ENCODE measurements at regions of chr15 and their contacts with region 1.

Region 1: GRCh38 chr15:40941528-40942336 is 11.5 kb upstream of the CHAC1 start:
- DNase-seq: no peak
- H3K4me3 ChIP-seq: peak overlapping the region; percentile 40 to 74 (median 56)
- H3K27ac ChIP-seq: peak overlapping the region; percentile 57 to 93 (median 85)
- H3K4me1 ChIP-seq: peaks cover 22 to 52% (median 28%) of the 10 kb centered on the region in 3 donors
- H3K27me3 ChIP-seq: no peaks in the 10 kb centered on the region
- CTCF ChIP-seq: peak in 5 of 6 experiments; percentile 11 to 92 (median 79)
- POLR2A ChIP-seq: peak in 2 of 4 donors; percentile 25 to 42

Region 2: DNA sequence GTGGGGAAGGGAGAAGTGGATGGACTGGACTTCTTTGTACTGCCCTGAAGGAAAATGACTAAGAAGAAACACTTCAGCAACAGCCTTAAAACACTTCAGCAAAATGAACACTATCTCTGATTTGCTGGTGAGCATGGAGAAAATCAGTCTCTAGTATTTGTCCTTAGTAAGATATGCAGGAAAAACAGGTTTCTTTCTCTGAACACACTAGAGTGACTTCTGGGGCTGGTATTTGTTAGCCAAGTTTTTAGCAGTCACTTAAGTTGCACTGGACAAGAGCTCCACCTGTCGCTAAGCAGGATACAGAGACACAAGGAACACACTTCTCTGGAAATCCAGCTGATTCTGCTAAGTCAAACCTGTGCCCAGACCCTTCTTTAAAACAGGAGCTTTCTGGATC is 76.8 kb after region 1 on chr15:
- intact Hi-C with region 1: loop called (anchors 5 kb)
- DNase-seq: no peak
- H3K4me3 ChIP-seq: no peak overlapping the region
- H3K27ac ChIP-seq: peak overlapping the region in 2 of 4 donors; percentile 46 to 59
- H3K4me1 ChIP-seq: peaks cover 0 to 31% (median 5%) of the 10 kb centered on the region in 3 donors
- H3K27me3 ChIP-seq: no peaks in the 10 kb centered on the region
- CTCF ChIP-seq: peak in 5 of 6 experiments; percentile 28 to 59 (median 47)
- POLR2A ChIP-seq: no peak

Measured in esophagus squamous epithelium (tissue), 5 donors.